PC-3 (cell line): ENCODE measurements at regions of chr7 and their contacts with region 1.

Region 1: DNA sequence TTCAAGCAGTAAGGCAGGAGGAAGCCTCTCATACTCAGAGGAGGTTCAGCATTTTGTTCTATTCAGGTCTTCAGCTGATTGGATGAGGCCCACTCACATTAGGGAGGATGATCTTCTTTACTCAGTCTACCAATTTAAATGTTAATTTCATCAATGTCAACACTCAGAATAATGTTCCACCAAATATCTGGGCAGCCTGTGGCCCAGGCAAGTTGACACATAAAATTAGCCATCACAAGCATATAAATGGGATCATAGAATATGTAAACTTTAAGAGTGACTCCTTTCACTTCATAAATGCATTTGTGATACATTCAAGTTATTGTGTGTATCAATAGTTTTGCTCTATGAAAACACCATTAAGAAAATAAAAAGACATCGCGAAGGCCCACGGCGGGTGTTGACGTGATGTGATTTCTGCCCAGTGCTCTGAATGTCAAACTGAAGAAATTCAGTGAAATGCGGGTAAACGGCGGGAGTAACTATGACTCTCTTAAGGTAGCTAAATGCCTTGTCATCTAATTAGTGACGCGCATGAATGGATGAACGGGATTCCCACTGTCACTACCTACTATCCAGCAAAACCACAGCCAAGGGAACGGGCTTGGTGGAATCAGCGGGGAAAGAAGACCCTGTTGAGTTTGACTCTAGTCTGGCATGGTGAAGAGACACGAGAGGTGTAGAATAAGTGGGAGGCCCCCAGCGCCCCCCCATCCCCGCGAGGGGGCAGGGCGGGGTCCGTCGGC is 536.1 kb upstream of the AUTS2 start:
- DNase-seq: no peak
- ATAC-seq: no peak
- H3K4me3 ChIP-seq: no peak overlapping the region
- H3K27ac ChIP-seq: no peak overlapping the region
- H3K4me1 ChIP-seq: no peaks in the 10 kb centered on the region
- H3K27me3 ChIP-seq: no peaks in the 10 kb centered on the region
- CTCF ChIP-seq: no peak

Region 2: GRCh38 chr7:69211739-69212138 is 149.5 kb after region 1 on chr7:
- CTCF ChIA-PET with region 1: no interaction called
- POLR2A ChIA-PET with region 1: no interaction called
- intact Hi-C with region 1: no loop called
- DNase-seq: no peak
- ATAC-seq: no peak
- H3K4me3 ChIP-seq: no peak overlapping the region
- H3K27ac ChIP-seq: no peak overlapping the region
- H3K4me1 ChIP-seq: no peaks in the 10 kb centered on the region
- H3K27me3 ChIP-seq: no peaks in the 10 kb centered on the region
- CTCF ChIP-seq: no peak

Region 3: GRCh38 chr7:70379210-70379609 is 1317.0 kb after region 1 on chr7:
- CTCF ChIA-PET with region 1: no interaction called
- POLR2A ChIA-PET with region 1: interaction called, 11 read pairs
- intact Hi-C with region 1: no loop called
- DNase-seq: no peak
- ATAC-seq: no peak
- H3K4me3 ChIP-seq: no peak overlapping the region
- H3K27ac ChIP-seq: no peak overlapping the region
- H3K4me1 ChIP-seq: no peaks in the 10 kb centered on the region
- H3K27me3 ChIP-seq: no peaks in the 10 kb centered on the region
- CTCF ChIP-seq: no peak